ENCODE measurements at regions of chr3 and their contacts with region 1.

Region 1: GRCh38 chr3:54374214-54374855 is 252.0 kb downstream of the CACNA2D3 start:
- DNase-seq: peak in 2 of 6 donors; percentile 21 to 31
- ATAC-seq: peak in 3 of 4 donors; percentile 79 to 83 (median 82)
- H3K4me3 ChIP-seq: no peak overlapping the region
- H3K27ac ChIP-seq: no peak overlapping the region
- H3K4me1 ChIP-seq: no peaks in the 10 kb centered on the region
- H3K27me3 ChIP-seq: peaks cover 0 to 13% (median 4%) of the 10 kb centered on the region in 4 donors
- CTCF ChIP-seq: peak; percentile 23 to 58 (median 45)

Region 2: GRCh38 chr3:53938645-53939044 is 435.7 kb before region 1 on chr3:
- intact Hi-C with region 1: loop called in 1 of 3 experiments (anchors 5 kb)
- DNase-seq: peak in 2 of 6 donors; percentile 16 to 61
- ATAC-seq: peak in 3 of 4 donors; percentile 83 to 89 (median 87)
- H3K4me3 ChIP-seq: no peak overlapping the region
- H3K27ac ChIP-seq: no peak overlapping the region
- H3K4me1 ChIP-seq: no peaks in the 10 kb centered on the region
- H3K27me3 ChIP-seq: peaks cover 0 to 10% (median under 1%) of the 10 kb centered on the region in 4 donors
- CTCF ChIP-seq: peak; percentile 47 to 70 (median 62)

Region 3: GRCh38 chr3:54146506-54147239 is 227.7 kb before region 1 on chr3:
- intact Hi-C with region 1: loop called in 2 of 3 experiments (anchors 10 kb)
- DNase-seq: peak; percentile 22 to 85 (median 59)
- ATAC-seq: peak; percentile 55 to 98 (median 96)
- H3K4me3 ChIP-seq: no peak overlapping the region
- H3K27ac ChIP-seq: no peak overlapping the region
- H3K4me1 ChIP-seq: no peaks in the 10 kb centered on the region
- H3K27me3 ChIP-seq: no peaks in the 10 kb centered on the region
- CTCF ChIP-seq: peak in 3 of 4 donors; percentile 45 to 58 (median 57)

Measured in pancreas (tissue), 10 donors.